ENCODE measurements at regions of chr1 and their contacts with region 1.

Region 1: GRCh38 chr1:33295450-33296081 is 25.3 kb downstream of the A3GALT2 start:
- DNase-seq: peak; percentile 95
- H3K4me3 Mint-ChIP-seq: no peak overlapping the region
- H3K27ac Mint-ChIP-seq: no peak overlapping the region
- H3K4me1 Mint-ChIP-seq: peaks cover 5% of the 10 kb centered on the region
- H3K27me3 Mint-ChIP-seq: no peaks in the 10 kb centered on the region

Region 2: DNA sequence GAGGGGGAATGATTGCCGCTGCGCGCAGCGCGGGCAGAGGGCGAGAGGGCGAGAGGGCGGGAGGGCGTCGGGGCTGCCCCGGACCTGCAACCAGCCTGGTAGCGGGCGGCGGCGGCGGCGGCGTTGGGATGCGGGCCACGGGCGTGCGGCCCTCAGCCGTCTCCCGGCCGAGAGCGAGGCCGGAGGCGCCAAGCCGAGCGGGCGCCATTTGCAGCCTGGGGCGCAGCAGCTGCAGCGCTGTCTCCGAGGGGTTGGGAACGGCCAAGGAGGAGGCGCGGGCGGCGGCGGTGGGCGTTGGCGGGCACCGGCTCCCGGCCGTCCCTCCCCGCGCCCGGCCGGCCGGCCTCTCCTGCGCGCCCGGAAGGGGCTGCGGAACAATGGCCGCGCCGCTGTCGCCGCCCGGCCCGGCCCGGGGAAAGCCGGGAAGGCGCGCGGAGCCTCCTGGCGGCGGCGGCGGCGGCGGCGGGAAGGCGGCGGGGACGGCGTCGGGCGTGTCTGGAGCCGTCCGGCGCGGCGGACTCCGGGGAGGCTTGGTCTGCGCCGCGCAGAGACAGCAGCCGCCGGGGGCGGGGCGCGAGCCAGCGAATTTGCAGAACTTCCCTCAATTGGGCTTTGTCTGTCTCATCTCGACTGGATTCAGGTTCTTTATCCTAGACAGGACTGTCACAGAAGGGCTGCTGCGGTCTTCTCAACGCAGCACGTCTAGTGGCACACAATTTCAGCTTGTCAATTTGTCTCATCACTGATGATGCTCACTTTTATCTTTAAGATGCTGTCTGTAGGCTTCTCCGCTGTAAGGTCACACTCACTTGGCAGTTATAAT is 795.0 kb before region 1 on chr1:
- CTCF ChIA-PET with region 1: no interaction called
- intact Hi-C with region 1: no loop called
- DNase-seq: peak; percentile 30
- H3K4me3 Mint-ChIP-seq: peak overlapping the region; percentile 77
- H3K27ac Mint-ChIP-seq: no peak overlapping the region
- H3K4me1 Mint-ChIP-seq: peaks cover 5% of the 10 kb centered on the region
- H3K27me3 Mint-ChIP-seq: peaks cover 36% of the 10 kb centered on the region

Region 3: DNA sequence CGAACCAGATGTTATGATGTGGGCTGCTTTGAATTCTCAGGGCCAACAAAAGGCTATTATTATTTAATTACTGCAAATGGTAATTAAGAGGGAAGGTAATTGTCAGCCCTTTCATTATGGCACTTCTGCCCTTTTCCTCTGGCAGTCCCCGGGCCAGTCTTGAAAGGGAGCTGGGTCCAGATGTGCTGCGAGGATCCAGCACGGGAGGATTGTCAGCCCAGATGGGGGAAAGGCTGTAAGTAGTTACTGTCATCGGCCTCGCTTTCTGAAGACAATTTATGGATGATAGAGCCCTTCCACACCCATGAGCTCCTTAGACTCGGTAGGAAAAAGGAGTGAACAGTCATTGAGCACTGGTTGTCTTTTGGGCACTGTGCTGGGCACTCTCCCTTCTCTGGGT is 48.0 kb before region 1 on chr1:
- CTCF ChIA-PET with region 1: no interaction called
- intact Hi-C with region 1: no loop called
- DNase-seq: no peak
- H3K4me3 Mint-ChIP-seq: no peak overlapping the region
- H3K27ac Mint-ChIP-seq: no peak overlapping the region
- H3K4me1 Mint-ChIP-seq: no peaks in the 10 kb centered on the region
- H3K27me3 Mint-ChIP-seq: peaks cover 7% of the 10 kb centered on the region

Region 4: DNA sequence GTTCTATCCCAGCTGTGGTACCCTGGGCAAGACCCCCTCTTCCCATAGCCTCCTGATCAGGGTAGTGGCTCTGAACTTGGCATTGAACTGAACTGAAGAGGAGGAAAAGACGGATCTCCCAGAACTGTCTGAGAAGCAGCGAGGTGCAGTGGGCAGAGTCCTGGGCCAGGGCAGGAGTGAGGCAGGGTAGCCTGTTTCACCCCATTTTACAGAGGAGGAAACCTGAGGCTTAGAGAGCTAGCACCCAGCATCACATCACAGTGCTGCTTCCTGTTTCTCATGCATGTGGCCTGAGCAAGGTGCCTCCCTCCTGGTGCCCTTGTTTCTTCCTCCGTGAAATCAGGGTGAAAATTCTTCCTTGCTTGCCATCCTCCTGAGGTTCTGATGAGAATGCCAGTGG is 22.2 kb before region 1 on chr1:
- CTCF ChIA-PET with region 1: interaction called, 10 read pairs
- intact Hi-C with region 1: no loop called
- DNase-seq: no peak
- H3K4me3 Mint-ChIP-seq: no peak overlapping the region
- H3K27ac Mint-ChIP-seq: no peak overlapping the region
- H3K4me1 Mint-ChIP-seq: peaks cover 25% of the 10 kb centered on the region
- H3K27me3 Mint-ChIP-seq: no peaks in the 10 kb centered on the region

Region 5: GRCh38 chr1:33306648-33307493 is 11.3 kb after region 1 on chr1:
- CTCF ChIA-PET with region 1: interaction called, 14 read pairs
- intact Hi-C with region 1: no loop called
- DNase-seq: no peak
- H3K4me3 Mint-ChIP-seq: no peak overlapping the region
- H3K27ac Mint-ChIP-seq: no peak overlapping the region
- H3K4me1 Mint-ChIP-seq: peaks cover 7% of the 10 kb centered on the region
- H3K27me3 Mint-ChIP-seq: peaks cover 8% of the 10 kb centered on the region

Region 6: DNA sequence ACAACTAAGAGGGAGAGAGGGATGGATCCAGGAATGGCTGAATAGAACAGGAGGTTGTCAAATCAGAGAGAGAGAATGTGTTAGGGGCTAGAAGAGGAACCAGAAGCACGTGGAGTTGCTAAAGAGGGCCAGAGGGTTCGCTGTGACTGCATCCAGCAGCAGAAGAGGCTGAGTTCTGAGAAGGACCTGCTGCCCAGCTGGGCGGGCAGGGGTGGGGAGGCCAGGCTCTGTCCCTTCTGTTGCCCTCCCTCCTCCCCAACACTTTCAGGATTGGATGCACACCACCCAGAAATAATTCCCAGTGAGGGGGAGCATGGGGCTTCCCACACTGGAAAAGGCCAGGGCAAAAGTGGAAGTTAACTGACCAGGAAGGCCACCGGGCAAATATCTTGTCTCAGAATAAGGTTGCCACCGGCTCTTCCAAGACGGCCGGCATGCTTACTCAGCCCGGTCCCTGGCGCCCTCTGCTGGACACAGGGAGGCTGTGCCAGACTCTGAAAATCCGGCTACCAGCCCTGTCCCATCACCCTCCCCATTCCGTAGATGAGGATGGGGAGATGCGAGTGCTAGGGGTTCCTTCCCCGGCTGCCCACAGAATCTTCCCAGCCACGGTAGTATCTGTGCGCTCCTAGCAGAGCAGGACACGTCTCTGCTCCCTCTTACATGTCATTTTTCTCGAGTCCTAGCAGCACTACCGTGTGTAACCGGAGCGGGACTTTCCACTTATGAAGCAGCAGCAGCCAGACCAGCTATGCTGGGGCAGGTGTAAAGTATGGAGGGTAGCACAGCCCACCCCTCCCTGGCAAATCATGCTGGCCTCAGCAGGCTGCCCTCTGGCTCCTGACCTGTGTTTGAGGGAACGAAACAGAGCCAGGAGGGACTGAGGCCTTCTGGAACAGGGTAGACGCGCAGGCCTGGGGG is 72.2 kb after region 1 on chr1:
- CTCF ChIA-PET with region 1: interaction called, 84 read pairs
- intact Hi-C with region 1: loop called (anchors 1 kb)
- DNase-seq: peak; percentile 92
- H3K4me3 Mint-ChIP-seq: no peak overlapping the region
- H3K27ac Mint-ChIP-seq: no peak overlapping the region
- H3K4me1 Mint-ChIP-seq: no peaks in the 10 kb centered on the region
- H3K27me3 Mint-ChIP-seq: no peaks in the 10 kb centered on the region

Region 7: GRCh38 chr1:33472349-33472980 is 176.9 kb after region 1 on chr1 and contains the start of gene ZSCAN20:
- CTCF ChIA-PET with region 1: interaction called, 42 read pairs
- intact Hi-C with region 1: loop called (anchors 1 kb)
- DNase-seq: peak; percentile 96
- H3K4me3 Mint-ChIP-seq: peak within 1 kb of the TSS; percentile 84
- H3K27ac Mint-ChIP-seq: peak within 1 kb of the TSS; percentile 83
- H3K4me1 Mint-ChIP-seq: peaks cover 24% of the 10 kb centered on the region
- H3K27me3 Mint-ChIP-seq: no peaks in the 10 kb centered on the region
- total RNA-seq, gene ZSCAN20: 2.5 to 2.6 TPM